ENCODE measurements at regions of chr7 and their contacts with region 1.

Region 1: GRCh38 chr7:94449148-94449725 is 54.5 kb downstream of the COL1A2 start:
- DNase-seq: peak in 1 of 2 donors; percentile 57
- ATAC-seq: peak in 2 of 3 donors; percentile 34 to 43
- H3K4me3 ChIP-seq: no peak overlapping the region
- H3K4me3 Mint-ChIP-seq: no peak overlapping the region
- H3K27ac ChIP-seq: no peak overlapping the region
- H3K27ac Mint-ChIP-seq: no peak overlapping the region
- H3K4me1 ChIP-seq: no peaks in the 10 kb centered on the region
- H3K4me1 Mint-ChIP-seq: no peaks in the 10 kb centered on the region
- H3K27me3 ChIP-seq: peaks cover 4% of the 10 kb centered on the region
- H3K27me3 Mint-ChIP-seq: peaks cover 8 to 9% of the 10 kb centered on the region in 2 donors
- CTCF ChIP-seq: peak; percentile 50

Region 2: GRCh38 chr7:95246831-95247370 is 797.7 kb after region 1 on chr7:
- intact Hi-C with region 1: loop called (anchors 2 kb)
- DNase-seq: peak in 1 of 2 donors; percentile 44
- ATAC-seq: peak in 1 of 3 donors; percentile 45
- H3K4me3 ChIP-seq: no peak overlapping the region
- H3K4me3 Mint-ChIP-seq: no peak overlapping the region
- H3K27ac ChIP-seq: no peak overlapping the region
- H3K27ac Mint-ChIP-seq: no peak overlapping the region
- H3K4me1 ChIP-seq: no peaks in the 10 kb centered on the region
- H3K4me1 Mint-ChIP-seq: no peaks in the 10 kb centered on the region
- H3K27me3 ChIP-seq: no peaks in the 10 kb centered on the region
- H3K27me3 Mint-ChIP-seq: no peaks in the 10 kb centered on the region
- CTCF ChIP-seq: peak; percentile 58

Region 3: DNA sequence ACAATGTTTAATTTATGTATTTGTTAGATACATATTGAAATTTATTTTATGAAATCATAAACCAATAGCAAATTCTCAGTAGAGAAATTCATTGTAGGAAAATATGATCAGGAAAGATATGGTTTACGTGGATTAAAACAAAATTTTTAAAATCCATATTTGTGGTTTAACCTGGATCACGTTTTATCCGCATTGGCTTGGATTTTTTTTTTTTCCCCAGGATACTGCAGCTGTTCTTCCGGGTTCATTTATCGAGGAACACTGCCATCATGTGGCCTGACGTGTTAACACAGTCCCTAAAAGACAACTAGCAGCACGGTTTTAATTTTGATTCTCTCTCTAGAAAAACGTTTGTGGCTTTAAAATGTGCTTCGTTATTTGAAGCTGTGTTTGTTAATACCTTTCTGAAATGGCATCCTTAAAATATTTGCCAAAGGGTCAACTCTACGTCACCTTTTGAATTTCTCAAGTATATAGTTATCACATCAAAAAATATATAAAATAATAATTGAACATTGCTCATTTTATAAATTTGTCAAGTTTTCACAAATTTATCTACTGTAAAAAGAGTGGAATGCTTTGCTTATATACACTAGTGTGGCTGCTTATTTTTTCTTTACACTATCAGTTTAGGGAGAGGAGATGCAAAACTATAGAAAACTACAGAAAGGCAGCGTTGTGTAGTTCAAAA is 1027.8 kb after region 1 on chr7:
- intact Hi-C with region 1: loop called (anchors 1 kb)
- DNase-seq: peak; percentile 27 to 79
- ATAC-seq: peak; percentile 81 to 98 (median 91)
- H3K4me3 ChIP-seq: no peak overlapping the region
- H3K4me3 Mint-ChIP-seq: peak overlapping the region; percentile 59
- H3K27ac ChIP-seq: no peak overlapping the region
- H3K27ac Mint-ChIP-seq: peak overlapping the region; percentile 66 to 74
- H3K4me1 ChIP-seq: peaks cover 5% of the 10 kb centered on the region
- H3K4me1 Mint-ChIP-seq: peaks cover 7 to 16% of the 10 kb centered on the region in 2 donors
- H3K27me3 ChIP-seq: no peaks in the 10 kb centered on the region
- H3K27me3 Mint-ChIP-seq: no peaks in the 10 kb centered on the region
- CTCF ChIP-seq: peak; percentile 84